Dendritic cell treated with granulocyte-macrophage colony-stimulating factor and Interleukin-4, amounts not matched to agents 40 ng/mL and 50 ng/mL, for 4 days (primary cell): ENCODE measurements at regions of chr16 and their contacts with region 1.

Region 1: GRCh38 chr16:81838794-81839193 is 59.7 kb downstream of the PLCG2 start:
- H3K4me3 Mint-ChIP-seq: no peak overlapping the region
- H3K27ac Mint-ChIP-seq: no peak overlapping the region
- H3K4me1 Mint-ChIP-seq: peaks cover 78% of the 10 kb centered on the region
- H3K27me3 Mint-ChIP-seq: no peaks in the 10 kb centered on the region

Region 2: DNA sequence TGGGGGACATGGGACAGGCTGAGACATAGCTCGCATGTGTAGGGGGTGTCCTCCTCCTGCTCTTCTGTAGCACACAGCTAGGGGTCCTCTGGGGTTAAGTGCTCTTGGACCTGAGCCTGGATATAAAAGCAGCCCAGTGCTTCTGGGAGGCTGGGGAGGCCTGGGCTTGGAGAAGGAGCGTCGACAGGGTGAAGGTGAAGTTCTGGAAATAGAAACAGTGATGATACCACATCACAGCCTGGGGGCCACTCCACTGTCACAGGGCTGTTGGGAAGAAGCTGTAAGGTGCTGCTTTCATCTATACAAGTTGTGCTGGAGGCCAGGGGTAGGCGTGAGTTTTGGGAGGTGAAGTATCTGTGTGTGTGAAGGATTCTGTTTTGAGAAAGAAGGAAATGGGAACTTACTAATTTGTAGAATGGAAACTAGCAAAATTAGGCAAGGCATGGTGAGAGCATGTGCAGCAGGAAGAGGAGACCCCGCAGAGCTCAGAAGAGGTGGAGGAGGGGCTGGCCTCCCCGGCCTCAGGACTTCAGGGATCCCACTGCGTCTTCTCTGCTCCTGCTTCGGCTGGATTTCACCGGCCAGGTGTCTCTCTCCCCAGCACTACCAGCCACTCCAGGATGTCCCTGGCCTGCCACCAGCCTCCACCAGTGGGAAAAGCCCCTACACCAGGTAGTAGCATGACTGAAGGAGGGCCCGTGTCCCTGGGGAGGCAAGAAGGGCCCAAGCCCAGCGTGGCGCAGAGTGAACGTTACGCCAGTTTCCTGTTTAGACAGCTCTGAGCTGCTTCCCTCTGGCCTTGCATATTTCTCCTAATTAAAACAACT is 40.3 kb before region 1 on chr16:
- intact Hi-C with region 1: loop called (anchors 5 kb)
- H3K4me3 Mint-ChIP-seq: peak overlapping the region; percentile 34
- H3K27ac Mint-ChIP-seq: peak overlapping the region; percentile 39
- H3K4me1 Mint-ChIP-seq: peaks cover 61% of the 10 kb centered on the region
- H3K27me3 Mint-ChIP-seq: no peaks in the 10 kb centered on the region